Prostate gland (tissue), 2 donors: ENCODE measurements at regions of chr17 and their contacts with region 1.

Region 1: GRCh38 chr17:64420143-64420971 is 28.6 kb upstream of the MILR1 start:
- DNase-seq: peak; percentile 46
- H3K4me3 ChIP-seq: no peak overlapping the region
- H3K27ac ChIP-seq: no peak overlapping the region
- H3K4me1 ChIP-seq: no peaks in the 10 kb centered on the region
- H3K27me3 ChIP-seq: no peaks in the 10 kb centered on the region
- CTCF ChIP-seq: peak; percentile 34 to 79 (median 71)
- POLR2A ChIP-seq: no peak

Region 2: DNA sequence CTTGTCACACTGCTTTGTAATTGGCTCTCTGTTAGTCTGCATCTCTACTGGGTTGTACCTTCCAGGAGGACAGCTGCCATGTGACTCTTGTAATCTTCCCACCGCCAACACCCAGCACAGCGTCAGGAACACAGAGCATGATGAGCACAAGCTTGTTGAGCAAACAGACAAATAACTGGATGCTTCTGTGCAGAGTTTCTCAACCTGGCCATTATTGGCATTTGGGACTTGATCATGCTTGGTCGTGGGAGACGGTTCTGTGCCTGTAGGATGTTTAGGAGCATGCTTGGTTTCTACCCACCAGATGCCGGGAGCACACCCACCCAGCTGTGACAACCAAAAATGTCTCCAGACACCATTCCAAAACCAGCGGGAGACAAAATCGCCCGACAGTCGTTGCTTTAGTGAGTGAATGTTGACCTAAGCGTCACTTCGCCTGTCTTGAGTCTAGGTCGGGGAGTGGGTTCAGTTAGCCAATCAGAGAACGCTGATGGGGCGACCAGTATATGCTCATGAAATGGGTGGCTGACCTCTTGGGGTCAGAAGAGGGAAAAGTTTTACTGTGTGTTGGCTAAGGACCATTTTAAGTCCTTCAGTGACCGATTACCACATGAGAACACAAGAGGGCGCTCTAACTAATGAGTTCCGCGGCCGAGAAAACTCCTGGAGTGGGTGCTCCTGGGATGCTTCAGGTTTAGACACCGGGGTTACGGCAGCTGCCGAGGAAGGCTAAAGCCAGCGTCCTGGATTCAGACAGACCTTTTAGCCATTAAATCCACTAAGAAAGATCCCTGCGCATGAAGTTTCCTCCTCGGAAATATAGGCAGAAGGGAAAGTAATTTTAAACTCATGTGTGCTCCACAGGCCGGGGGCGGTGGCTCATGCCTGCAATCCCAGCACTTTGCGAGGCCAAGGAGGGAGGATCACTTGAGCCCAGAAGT is 99.5 kb before region 1 on chr17:
- intact Hi-C with region 1: loop called (anchors 2 kb)
- DNase-seq: peak; percentile 41
- H3K4me3 ChIP-seq: no peak overlapping the region
- H3K27ac ChIP-seq: no peak overlapping the region
- H3K4me1 ChIP-seq: no peaks in the 10 kb centered on the region
- H3K27me3 ChIP-seq: no peaks in the 10 kb centered on the region
- CTCF ChIP-seq: peak; percentile 59 to 71 (median 68)
- POLR2A ChIP-seq: no peak

Region 3: DNA sequence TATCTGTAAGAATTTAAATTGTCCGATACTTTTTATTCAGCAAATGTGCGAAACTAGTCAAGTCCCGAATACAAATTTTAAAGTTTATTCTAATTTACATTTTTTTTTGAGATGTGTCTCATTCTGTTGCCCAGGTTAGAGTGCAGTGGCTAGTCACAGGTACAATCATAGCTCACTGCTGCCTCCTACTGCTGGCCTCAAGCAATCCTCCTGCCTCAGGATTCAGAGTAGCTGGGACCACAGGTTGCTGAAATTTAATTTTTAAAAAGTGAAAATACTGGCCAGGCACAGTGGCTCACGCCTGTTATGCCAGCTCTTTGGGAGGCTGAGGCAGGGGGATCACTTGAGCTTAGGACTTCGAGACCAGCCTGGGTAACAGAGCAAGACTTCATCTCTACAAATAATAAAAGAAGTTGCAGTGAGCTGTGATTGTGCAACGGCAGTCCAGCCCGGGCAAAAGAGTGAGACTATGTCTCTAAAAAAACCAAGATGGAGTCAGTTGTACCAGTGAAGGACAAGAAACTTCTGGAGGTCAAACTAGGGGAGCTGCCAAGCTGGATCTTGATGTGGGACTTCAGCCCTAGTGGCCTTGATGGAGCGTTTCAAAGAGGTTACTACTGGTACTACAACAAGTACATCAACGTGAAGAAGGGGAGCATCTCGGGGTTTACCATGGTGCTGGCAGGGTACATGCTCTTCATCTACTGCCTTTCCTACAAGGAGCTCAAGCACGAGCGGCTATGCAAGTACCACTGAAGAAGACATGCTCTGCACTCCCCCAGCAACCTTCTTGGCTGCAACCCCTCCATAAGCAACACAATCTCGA is 70.9 kb after region 1 on chr17:
- intact Hi-C with region 1: loop called (anchors 5 kb)
- DNase-seq: no peak
- H3K4me3 ChIP-seq: no peak overlapping the region
- H3K27ac ChIP-seq: no peak overlapping the region
- H3K4me1 ChIP-seq: no peaks in the 10 kb centered on the region
- H3K27me3 ChIP-seq: no peaks in the 10 kb centered on the region
- CTCF ChIP-seq: peak in 2 of 4 experiments; percentile 28 to 41
- POLR2A ChIP-seq: no peak

Region 4: DNA sequence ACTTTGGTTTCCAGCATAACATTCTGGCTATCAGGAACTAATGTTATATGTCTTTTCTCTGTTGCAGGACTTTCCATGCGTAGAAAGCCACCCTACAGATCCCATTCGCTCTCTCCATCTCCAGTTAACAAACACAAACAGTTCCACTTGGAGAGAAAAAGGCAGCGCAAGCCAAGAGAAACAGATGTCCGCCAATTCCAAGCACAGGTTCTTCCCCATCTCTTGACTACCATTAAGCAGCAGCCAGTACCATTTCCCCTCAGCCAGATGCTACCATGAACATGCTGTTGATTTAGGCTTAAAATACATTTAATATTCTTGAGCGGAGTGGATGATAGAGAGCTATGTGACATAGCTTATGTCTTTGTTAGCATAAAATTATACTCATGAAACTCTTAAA is 108.9 kb after region 1 on chr17:
- intact Hi-C with region 1: no loop called
- DNase-seq: no peak
- H3K4me3 ChIP-seq: no peak overlapping the region
- H3K27ac ChIP-seq: no peak overlapping the region
- H3K4me1 ChIP-seq: no peaks in the 10 kb centered on the region
- H3K27me3 ChIP-seq: no peaks in the 10 kb centered on the region
- CTCF ChIP-seq: no peak
- POLR2A ChIP-seq: no peak